ENCODE measurements at regions of chr12 and their contacts with region 1.

Region 1: DNA sequence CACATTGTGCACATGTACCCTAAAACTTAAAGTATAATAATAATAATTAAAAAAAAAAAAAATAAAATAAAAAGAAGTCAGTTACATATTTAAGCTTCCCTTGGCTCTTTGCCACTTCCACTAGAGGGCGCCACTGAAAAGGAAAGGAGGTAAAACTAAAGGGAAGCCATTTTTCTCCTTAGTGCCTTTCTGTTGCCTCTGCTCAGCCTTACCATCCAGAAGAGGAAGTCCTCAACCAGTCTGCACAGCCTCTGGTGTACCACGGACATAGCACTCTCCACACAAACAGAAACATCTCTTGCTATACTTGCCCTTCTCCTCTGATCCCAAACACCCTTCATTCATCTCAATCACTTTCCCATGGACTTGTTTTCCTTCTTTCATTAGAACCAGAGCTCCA is 169.0 kb upstream of the EEA1 start:
- DNase-seq: peak; percentile 87
- H3K4me3 ChIP-seq: no peak overlapping the region
- H3K27ac ChIP-seq: no peak overlapping the region
- H3K4me1 ChIP-seq: peaks cover 7% of the 10 kb centered on the region
- CTCF ChIP-seq: peak; percentile 86

Region 2: GRCh38 chr12:92784795-92785562 is 313.1 kb before region 1 on chr12:
- CTCF ChIA-PET with region 1: no interaction called
- POLR2A ChIA-PET with region 1: no interaction called
- intact Hi-C with region 1: loop called (anchors 5 kb)
- DNase-seq: peak; percentile 79
- H3K4me3 ChIP-seq: no peak overlapping the region
- H3K27ac ChIP-seq: no peak overlapping the region
- H3K4me1 ChIP-seq: no peaks in the 10 kb centered on the region
- CTCF ChIP-seq: peak; percentile 84

Region 3: DNA sequence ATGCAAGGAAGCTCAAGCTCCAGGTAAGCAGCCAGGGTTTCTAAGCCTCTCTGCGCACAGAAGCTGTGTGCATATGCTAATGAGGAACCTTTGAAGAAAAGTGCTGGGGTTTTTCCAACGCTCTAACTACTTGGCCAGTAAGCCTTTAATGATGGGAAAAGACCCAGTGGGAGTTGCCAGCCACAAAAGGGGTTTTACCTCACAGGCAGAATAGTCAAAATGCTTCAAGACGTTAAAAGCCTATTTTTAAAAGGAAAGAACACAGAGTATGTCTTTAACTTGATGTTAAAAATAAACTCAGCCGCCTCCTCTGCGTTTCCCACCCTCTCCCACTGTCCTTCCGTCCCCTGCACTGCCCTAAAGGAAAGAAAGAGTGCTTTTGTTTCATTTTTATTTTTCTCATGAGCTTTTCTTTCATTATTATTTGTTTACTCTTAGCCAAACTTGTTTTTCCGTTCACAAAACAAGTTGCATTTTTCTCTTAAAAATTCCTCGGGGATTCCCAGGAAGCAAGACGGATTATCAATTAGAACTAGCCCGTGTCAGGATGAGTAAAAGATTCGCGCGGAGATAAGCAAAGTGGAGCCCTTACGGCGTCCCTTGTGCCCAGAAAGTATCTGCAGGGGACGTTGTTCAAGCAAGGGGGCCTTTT is 69.9 kb after region 1 on chr12:
- CTCF ChIA-PET with region 1: no interaction called
- POLR2A ChIA-PET with region 1: no interaction called
- intact Hi-C with region 1: loop called (anchors 5 kb)
- DNase-seq: peak; percentile 58
- H3K4me3 ChIP-seq: peak overlapping the region; percentile 59
- H3K27ac ChIP-seq: peak overlapping the region; percentile 90
- H3K4me1 ChIP-seq: peaks cover 44% of the 10 kb centered on the region
- CTCF ChIP-seq: no peak

Region 4: GRCh38 chr12:93287149-93287548 is 189.1 kb after region 1 on chr12:
- CTCF ChIA-PET with region 1: no interaction called
- POLR2A ChIA-PET with region 1: no interaction called
- intact Hi-C with region 1: loop called (anchors 5 kb)
- DNase-seq: no peak
- H3K4me3 ChIP-seq: no peak overlapping the region
- H3K27ac ChIP-seq: no peak overlapping the region
- H3K4me1 ChIP-seq: no peaks in the 10 kb centered on the region
- CTCF ChIP-seq: no peak

Region 5: GRCh38 chr12:93397412-93397811 is 299.3 kb after region 1 on chr12:
- CTCF ChIA-PET with region 1: no interaction called
- POLR2A ChIA-PET with region 1: interaction called, 3 read pairs
- intact Hi-C with region 1: loop called (anchors 2 kb)
- DNase-seq: no peak
- H3K4me3 ChIP-seq: no peak overlapping the region
- H3K27ac ChIP-seq: no peak overlapping the region
- H3K4me1 ChIP-seq: peaks cover 6% of the 10 kb centered on the region
- CTCF ChIP-seq: no peak